Sigmoid colon (tissue), 7 donors: ENCODE measurements at regions of chr6 and their contacts with region 1.

Region 1: GRCh38 chr6:152975204-152975915 is 7.5 kb downstream of the FBXO5 start:
- DNase-seq: no peak
- H3K4me3 ChIP-seq: no peak overlapping the region
- H3K27ac ChIP-seq: no peak overlapping the region
- H3K4me1 ChIP-seq: no peaks in the 10 kb centered on the region
- H3K27me3 ChIP-seq: no peaks in the 10 kb centered on the region
- CTCF ChIP-seq: no peak
- EP300 ChIP-seq: no peak
- POLR2A ChIP-seq: no peak

Region 2: DNA sequence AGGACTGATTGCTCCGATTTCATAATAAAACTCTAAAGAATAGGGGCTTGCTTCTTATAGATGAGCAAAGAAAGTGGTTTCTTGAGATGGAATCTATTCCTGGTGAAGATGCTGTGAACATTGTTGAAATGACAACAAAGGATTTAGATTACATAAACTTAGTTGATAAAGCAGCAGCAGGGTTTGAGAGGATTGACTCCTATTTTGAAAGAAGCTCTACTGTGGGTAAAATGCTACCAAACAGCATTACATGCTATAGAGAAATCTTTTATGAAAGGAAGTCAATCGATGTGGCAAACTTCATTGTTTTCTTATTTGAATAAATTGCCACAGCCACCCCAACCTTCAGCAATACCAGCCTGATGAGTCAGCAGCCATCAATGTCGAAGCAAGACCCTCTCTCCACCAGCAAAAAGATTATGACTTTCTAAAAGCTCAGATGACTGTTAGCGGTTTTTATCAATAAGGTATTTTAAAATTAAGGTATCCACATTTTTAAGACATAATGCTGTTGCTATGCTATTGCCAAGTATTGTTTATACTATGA is 39.8 kb after region 1 on chr6:
- intact Hi-C with region 1: loop called (anchors 5 kb)
- DNase-seq: no peak
- H3K4me3 ChIP-seq: no peak overlapping the region
- H3K27ac ChIP-seq: no peak overlapping the region
- H3K4me1 ChIP-seq: no peaks in the 10 kb centered on the region
- H3K27me3 ChIP-seq: no peaks in the 10 kb centered on the region
- CTCF ChIP-seq: no peak
- EP300 ChIP-seq: no peak
- POLR2A ChIP-seq: no peak